GM12878 (cell line): ENCODE measurements at regions of chr12 and their contacts with region 1.

Region 1: DNA sequence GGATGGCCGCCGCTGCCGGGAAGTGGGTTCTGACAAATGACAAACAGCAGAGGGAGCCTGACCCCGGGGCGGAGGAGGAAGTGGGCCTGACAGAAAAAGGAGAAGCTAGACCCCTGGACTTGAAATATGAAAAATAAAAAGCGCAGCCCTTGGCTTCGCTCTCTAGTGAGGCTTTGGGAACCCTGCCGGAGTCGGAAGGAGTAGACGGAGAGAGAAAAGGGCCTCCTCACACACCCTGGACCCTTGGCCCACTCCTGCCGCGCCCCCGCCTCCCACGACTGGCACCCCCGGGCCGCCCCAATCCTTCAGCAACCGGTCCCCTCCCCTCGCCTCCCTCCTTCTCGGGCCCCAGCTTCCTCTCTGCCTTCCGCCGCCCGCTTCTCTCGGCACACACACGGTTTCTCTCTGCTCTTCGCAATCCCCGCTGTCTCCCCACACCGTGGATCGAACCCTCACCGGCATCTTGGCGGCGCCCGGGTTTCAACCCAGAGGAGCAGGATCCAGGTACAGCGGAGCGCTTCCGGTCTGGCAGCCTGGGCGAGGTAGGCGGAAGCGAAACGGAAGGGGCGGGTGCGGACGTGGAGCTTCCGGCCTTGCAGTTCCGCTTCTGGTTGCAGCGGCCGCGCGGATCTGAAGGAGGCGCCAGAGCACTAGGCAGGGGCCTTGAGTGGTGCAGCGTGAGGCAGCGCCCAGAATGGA is at the start of gene ARPC3:
- DNase-seq: peak; percentile 77
- ATAC-seq: peak; percentile 98
- H3K4me3 ChIP-seq: peak within 1 kb of the TSS; percentile 97
- H3K27ac ChIP-seq: peak within 1 kb of the TSS; percentile 82
- H3K4me1 ChIP-seq: peaks cover 4% of the 10 kb centered on the region
- H3K27me3 ChIP-seq: no peaks in the 10 kb centered on the region
- CTCF ChIP-seq: peak; percentile 92 to 99 (median 94)
- EP300 ChIP-seq: no peak
- POLR2A ChIP-seq: peak; percentile 90
- RAD21 ChIP-seq: peak; percentile 93
- polyA plus RNA-seq, gene ARPC3: 635 to 890 TPM

Region 2: GRCh38 chr12:110245369-110245772 is 204.6 kb before region 1 on chr12:
- CTCF ChIA-PET with region 1: no interaction called
- POLR2A ChIA-PET with region 1: no interaction called
- RAD21 ChIA-PET with region 1: no interaction called
- SMC1A ChIA-PET with region 1: no interaction called
- in situ Hi-C with region 1: no loop called
- intact Hi-C with region 1: no loop called
- DNase-seq: no peak
- ATAC-seq: peak; percentile 97
- H3K4me3 ChIP-seq: no peak overlapping the region
- H3K27ac ChIP-seq: no peak overlapping the region
- H3K4me1 ChIP-seq: peaks cover 5% of the 10 kb centered on the region; the same call in 1 of the 2 replicates
- H3K27me3 ChIP-seq: no peaks in the 10 kb centered on the region
- CTCF ChIP-seq: peak; percentile 67 to 81 (median 74)
- EP300 ChIP-seq: no peak
- POLR2A ChIP-seq: no peak
- RAD21 ChIP-seq: peak; percentile 66

Region 3: GRCh38 chr12:110468212-110469048 is 18.5 kb after region 1 on chr12 and contains the starts of genes FAM216A and GPN3:
- CTCF ChIA-PET with region 1: interaction called, 70 read pairs
- POLR2A ChIA-PET with region 1: interaction called, 43 read pairs
- RAD21 ChIA-PET with region 1: interaction called, 67 read pairs
- SMC1A ChIA-PET with region 1: interaction called, 36 read pairs
- in situ Hi-C with region 1: no loop called
- intact Hi-C with region 1: no loop called
- DNase-seq: peak; percentile 96
- ATAC-seq: peak; percentile 88
- H3K4me3 ChIP-seq: peak within 1 kb of the TSS; percentile 73
- H3K27ac ChIP-seq: peak within 1 kb of the TSS; percentile 91
- H3K4me1 ChIP-seq: peaks cover 6% of the 10 kb centered on the region
- H3K27me3 ChIP-seq: no peaks in the 10 kb centered on the region
- CTCF ChIP-seq: no peak
- EP300 ChIP-seq: no peak
- POLR2A ChIP-seq: peak; percentile 91
- RAD21 ChIP-seq: no peak
- polyA plus RNA-seq, gene FAM216A: 15.0 to 36.0 TPM
- polyA plus RNA-seq, gene GPN3: 76.9 to 78.7 TPM

Region 4: GRCh38 chr12:110513842-110514241 is 63.9 kb after region 1 on chr12:
- CTCF ChIA-PET with region 1: interaction called, 24 read pairs
- POLR2A ChIA-PET with region 1: interaction called, 7 read pairs
- RAD21 ChIA-PET with region 1: interaction called, 21 read pairs
- SMC1A ChIA-PET with region 1: interaction called, 15 read pairs
- in situ Hi-C with region 1: no loop called
- intact Hi-C with region 1: no loop called
- DNase-seq: no peak
- ATAC-seq: no peak
- H3K4me3 ChIP-seq: no peak overlapping the region
- H3K27ac ChIP-seq: no peak overlapping the region
- H3K4me1 ChIP-seq: no peaks in the 10 kb centered on the region
- H3K27me3 ChIP-seq: no peaks in the 10 kb centered on the region
- CTCF ChIP-seq: no peak
- EP300 ChIP-seq: no peak
- POLR2A ChIP-seq: no peak
- RAD21 ChIP-seq: no peak

Region 5: DNA sequence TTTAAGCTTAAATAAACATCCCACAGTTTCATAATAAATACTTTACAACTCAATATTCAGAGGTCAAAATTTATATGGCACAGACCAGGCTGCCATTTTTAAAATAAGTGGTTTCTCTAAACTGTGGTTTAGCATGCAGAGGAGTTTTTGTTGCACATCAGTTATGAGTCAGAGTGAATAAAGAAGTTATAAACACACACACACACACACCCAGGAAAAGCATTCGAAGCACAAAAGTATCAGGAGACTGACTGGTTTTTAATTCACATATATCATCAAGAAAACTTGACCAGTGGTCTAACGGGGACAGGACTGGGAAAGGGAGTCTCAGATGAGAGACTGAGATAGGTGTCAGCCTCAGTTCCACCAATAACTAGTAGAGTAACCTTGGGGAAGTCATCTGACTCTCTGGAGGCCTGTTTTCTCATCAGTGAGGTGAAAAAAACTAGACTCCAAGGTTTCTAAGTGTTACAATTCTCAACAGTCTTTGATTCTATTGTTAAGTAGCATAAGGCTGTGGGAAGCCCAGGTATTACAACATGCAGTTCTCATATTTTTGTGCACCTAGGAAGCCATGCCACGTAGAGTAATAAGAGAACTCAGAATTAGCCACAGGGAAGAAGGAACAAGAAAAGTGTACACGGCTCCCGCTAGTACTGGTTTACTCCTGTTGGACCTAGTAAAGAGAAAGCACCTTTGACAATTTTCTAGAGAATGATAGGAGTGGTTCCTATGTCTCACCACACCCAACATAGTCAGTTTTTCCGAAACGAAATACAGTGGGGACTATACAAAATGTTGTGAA is 128.0 kb after region 1 on chr12:
- CTCF ChIA-PET with region 1: interaction called, 10 read pairs
- POLR2A ChIA-PET with region 1: interaction called, 8 read pairs
- RAD21 ChIA-PET with region 1: interaction called, 10 read pairs
- SMC1A ChIA-PET with region 1: interaction called, 5 read pairs
- in situ Hi-C with region 1: no loop called
- intact Hi-C with region 1: loop called (anchors 5 kb)
- DNase-seq: peak; percentile 84
- ATAC-seq: peak; percentile 45
- H3K4me3 ChIP-seq: peak overlapping the region; percentile 82
- H3K27ac ChIP-seq: peak overlapping the region; percentile 95
- H3K4me1 ChIP-seq: peaks cover 12% of the 10 kb centered on the region
- H3K27me3 ChIP-seq: no peaks in the 10 kb centered on the region
- CTCF ChIP-seq: no peak
- EP300 ChIP-seq: peak; percentile 67 to 76; a peak in 2 of 4 replicates
- POLR2A ChIP-seq: no peak
- RAD21 ChIP-seq: no peak

Region 6: DNA sequence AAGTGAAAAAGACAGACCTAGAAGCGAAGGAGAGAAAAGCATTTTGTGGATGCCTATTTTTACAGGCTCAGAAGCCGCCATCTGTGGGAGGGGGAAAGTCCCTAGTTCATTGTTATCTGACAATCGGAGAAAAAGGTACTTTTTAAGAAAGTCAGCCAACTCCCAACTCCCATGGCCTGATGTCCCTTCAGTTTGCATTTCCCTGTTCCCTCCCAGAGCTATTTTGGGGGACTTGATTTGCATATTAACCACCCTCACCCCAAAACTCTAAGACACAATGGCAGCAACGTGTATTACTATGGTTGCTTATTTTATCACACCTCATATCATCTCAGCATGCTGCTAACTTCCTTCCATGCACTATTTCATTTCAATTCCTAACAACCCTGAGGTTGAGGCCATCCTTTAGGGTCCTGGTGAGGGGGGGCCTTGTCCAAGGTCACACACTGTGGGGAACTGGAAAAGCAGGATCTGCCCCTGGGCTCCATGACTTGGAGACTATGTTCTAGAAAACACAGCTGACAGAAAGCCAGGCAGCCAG is 220.3 kb after region 1 on chr12:
- CTCF ChIA-PET with region 1: no interaction called
- POLR2A ChIA-PET with region 1: no interaction called
- RAD21 ChIA-PET with region 1: interaction called, 14 read pairs
- SMC1A ChIA-PET with region 1: no interaction called
- in situ Hi-C with region 1: no loop called
- intact Hi-C with region 1: no loop called
- DNase-seq: peak; percentile 95
- ATAC-seq: peak; percentile 63
- H3K4me3 ChIP-seq: peak overlapping the region; percentile 82; the same call in 1 of the 2 replicates
- H3K27ac ChIP-seq: peak overlapping the region; percentile 99
- H3K4me1 ChIP-seq: peaks cover 76% of the 10 kb centered on the region
- H3K27me3 ChIP-seq: no peaks in the 10 kb centered on the region
- CTCF ChIP-seq: no peak
- EP300 ChIP-seq: peak; percentile 81 to 95
- POLR2A ChIP-seq: no peak; the same call in 1 of the 2 replicates
- RAD21 ChIP-seq: 0 out of 2 replicates have a peak, but pooled peaks have one; percentile 6

Region 7: GRCh38 chr12:110888256-110888991 is 438.5 kb after region 1 on chr12:
- CTCF ChIA-PET with region 1: interaction called, 9 read pairs
- POLR2A ChIA-PET with region 1: no interaction called
- RAD21 ChIA-PET with region 1: interaction called, 3 read pairs
- SMC1A ChIA-PET with region 1: no interaction called
- in situ Hi-C with region 1: no loop called
- intact Hi-C with region 1: loop called (anchors 5 kb)
- DNase-seq: no peak
- ATAC-seq: no peak
- H3K4me3 ChIP-seq: no peak overlapping the region
- H3K27ac ChIP-seq: no peak overlapping the region
- H3K4me1 ChIP-seq: no peaks in the 10 kb centered on the region
- H3K27me3 ChIP-seq: no peaks in the 10 kb centered on the region; a peak in 1 of 4 replicates
- CTCF ChIP-seq: no peak
- EP300 ChIP-seq: no peak
- POLR2A ChIP-seq: no peak
- RAD21 ChIP-seq: no peak